Left cardiac atrium (tissue), 4 donors: ENCODE measurements at regions of chr2 and their contacts with region 1.

Region 1: DNA sequence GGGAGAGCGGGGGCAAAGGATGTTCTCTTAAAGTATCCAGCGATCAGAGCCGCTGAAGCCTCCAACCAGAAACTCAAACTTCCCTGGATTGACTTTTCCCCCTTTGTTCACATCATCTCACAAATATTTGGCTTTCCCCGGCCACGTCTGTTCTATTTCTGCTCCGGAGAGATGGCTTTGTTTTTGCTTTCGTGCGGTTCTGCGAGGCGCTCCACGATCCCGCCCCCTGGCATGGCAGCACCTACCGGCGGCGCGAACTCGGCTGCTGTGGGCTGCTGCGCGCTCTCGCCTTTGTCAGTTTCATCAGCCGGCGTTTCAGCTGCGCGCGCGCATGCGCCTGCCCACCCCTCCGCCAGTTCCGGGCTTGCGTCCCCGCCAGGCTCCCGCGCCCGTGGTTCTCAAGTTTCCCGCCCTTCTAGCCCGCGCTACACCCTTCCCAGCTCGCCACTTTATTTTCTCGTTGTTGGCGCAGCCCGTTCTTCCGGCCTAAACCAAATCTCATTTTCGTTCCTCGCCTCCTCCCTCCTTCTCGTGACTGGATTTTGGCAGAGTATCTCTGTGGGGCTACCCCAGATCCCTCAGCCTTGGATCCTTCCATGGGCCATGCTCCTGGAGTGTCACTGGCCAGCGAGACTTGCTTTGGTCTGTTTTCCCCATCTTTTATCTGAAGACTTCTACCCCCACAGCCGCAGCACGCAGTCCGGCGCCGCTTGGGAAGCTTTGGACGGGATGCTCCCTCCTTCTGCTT is 98.0 kb downstream of the INSIG2 start:
- DNase-seq: peak; percentile 91
- ATAC-seq: peak; percentile 98

Region 2: DNA sequence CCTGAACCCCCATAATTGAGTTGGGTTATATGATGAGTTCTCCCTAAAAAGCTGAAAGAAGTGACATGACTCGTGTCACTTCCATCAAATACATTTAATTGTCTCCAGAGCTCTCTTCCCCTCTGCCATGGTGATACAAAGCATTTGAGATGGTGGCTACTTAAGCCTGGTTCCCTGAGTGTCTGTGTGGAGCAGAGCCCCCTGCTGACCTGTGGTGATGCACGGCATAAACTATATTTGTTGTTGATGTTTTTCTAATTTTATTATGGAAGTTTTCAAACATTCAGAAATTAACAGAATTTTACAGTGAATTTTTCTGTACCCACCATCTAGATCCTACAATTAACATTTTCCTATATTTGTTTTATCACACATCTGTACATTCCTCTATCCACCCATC is 432.4 kb before region 1 on chr2:
- intact Hi-C with region 1: no loop called
- DNase-seq: no peak
- ATAC-seq: no peak

Region 3: GRCh38 chr2:118056165-118056534 is 130.1 kb before region 1 on chr2:
- intact Hi-C with region 1: no loop called
- DNase-seq: no peak
- ATAC-seq: peak in 1 of 2 donors; percentile 75

Region 4: DNA sequence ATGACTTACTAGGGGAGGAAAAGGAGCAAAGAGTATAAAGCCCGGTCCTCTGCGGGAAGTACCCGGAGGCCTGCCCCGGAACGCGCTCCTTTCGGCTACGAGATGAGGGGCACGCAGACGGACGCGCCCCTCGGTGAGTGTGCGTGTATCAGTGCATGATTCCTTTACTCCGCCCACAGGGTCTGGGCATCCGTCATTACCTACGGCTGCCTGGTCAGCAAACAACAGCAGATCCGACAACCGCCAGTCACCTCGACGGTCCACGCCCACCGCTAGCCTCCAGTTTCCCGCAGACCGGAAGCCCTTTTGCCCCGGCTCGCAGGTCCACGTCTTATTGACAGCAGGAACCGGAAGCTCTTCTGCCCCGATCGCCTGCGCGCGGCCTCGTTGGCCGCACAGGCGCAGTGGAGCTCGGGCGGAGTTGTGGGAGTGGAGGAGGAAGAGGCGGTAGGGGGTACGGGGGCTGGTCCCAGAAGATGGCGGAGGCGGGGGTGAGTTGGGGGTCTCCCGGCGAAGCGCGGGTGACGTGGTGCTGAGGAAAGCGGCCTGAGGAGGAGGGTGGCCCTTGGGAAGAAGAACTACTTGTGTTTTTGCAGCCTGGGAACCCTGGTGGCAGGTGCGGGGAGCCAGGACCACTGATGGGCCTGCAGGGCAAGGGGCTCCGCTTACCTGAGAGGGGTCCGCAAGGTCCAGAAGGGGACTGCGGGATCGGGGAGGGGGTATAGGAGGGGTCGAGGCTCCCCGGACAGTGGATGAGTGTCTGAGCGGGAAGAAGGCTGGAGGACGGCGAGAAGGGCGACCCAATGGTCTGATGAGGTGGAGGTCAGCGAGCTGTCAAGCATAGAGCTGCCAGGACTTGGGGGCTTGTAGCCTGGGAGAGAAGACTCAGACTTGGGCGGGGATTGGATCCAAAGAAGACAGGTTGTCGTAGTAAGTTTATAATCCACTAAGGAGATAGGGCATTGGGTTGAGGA is 97.9 kb before region 1 on chr2 and contains the start of gene INSIG2:
- intact Hi-C with region 1: loop called in 1 of 2 experiments (anchors 10 kb)
- DNase-seq: peak; percentile 95
- ATAC-seq: peak; percentile 99
- total RNA-seq, gene INSIG2: 15.2 to 15.9 TPM

Region 5: DNA sequence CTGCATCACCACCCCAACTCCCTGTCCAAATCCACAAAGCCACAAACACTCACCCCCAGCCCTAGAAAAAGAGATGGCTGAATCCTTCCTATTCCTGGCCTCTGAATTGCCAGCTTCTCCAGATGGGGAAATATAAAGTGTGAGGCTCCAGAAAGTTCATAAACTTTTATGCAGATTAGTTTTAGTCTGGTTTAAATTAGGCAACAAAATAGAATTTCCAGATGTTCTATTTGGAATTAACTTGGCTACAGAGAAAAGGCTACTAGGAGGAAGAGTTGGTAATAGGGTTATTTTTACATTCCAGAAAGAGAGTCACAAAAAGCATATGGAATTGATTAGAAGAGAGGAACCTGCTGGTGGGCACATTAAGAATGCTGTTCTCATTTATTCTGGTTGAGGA is 605.2 kb after region 1 on chr2:
- intact Hi-C with region 1: no loop called
- DNase-seq: no peak
- ATAC-seq: no peak